ENCODE measurements at regions of chr1 and their contacts with region 1.

Region 1: DNA sequence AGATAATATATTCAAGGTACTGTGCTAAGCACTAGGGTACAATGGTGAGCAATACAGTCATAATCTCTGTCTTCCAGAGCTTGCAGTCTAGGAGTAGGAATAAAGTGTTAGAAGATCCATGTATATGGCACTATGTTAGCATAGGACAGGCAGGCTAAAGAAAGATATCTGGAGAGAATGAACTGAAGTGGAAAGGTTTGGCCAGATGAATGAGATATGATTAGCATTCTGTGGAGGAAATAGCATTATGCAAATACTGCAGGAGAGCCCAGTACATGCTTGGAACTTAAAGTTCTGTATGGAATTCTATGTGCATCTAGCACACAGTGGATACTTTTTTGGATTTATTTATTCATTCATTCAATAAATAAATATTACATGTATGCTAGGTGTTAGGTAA is 4.7 kb downstream of the C8A start:
- DNase-seq: no peak
- ATAC-seq: no peak

Region 2: DNA sequence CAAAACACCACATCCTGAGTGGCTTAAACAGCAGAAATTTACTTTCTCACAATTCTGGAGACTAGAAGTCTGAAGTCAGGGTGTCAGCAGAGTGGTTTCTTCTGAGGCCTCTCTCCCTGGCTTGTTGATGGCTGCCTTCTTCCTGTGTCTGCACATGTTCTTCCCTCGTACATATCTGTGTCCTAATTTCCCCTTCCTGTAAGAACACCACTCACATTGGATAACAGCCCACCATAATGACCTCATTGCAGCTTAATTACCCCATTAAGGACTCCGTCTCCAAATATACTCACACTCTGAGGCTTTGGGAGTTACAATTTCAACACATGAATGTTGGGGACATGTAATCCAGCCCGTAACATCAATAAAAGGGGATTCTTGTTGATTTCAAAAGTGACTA is 18.7 kb after region 1 on chr1:
- intact Hi-C with region 1: loop called (anchors 2 kb)
- DNase-seq: no peak
- ATAC-seq: peak; percentile 39

Region 3: DNA sequence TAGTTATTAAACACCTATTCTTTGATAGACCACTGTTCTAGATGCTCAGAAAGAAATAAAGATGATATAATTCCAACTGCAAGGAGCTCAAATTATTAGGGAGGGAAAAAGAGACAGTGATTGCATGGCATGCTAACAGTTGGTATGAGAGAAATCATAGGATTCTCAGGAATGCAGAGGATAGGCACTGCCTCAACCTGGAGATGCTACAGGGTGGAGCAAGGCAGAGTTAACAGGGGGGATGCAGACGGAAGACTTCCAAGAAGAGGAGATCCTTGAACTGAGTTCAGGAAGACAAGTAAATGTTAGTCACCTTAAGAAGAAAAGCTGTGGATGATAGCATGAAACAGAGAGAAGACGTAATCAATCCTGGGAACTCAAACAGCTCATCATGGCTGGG is 440.9 kb after region 1 on chr1:
- intact Hi-C with region 1: no loop called
- DNase-seq: no peak
- ATAC-seq: no peak